CD8-positive, alpha-beta T cell (primary cell): ENCODE measurements at regions of chr17 and their contacts with region 1.

Region 1: DNA sequence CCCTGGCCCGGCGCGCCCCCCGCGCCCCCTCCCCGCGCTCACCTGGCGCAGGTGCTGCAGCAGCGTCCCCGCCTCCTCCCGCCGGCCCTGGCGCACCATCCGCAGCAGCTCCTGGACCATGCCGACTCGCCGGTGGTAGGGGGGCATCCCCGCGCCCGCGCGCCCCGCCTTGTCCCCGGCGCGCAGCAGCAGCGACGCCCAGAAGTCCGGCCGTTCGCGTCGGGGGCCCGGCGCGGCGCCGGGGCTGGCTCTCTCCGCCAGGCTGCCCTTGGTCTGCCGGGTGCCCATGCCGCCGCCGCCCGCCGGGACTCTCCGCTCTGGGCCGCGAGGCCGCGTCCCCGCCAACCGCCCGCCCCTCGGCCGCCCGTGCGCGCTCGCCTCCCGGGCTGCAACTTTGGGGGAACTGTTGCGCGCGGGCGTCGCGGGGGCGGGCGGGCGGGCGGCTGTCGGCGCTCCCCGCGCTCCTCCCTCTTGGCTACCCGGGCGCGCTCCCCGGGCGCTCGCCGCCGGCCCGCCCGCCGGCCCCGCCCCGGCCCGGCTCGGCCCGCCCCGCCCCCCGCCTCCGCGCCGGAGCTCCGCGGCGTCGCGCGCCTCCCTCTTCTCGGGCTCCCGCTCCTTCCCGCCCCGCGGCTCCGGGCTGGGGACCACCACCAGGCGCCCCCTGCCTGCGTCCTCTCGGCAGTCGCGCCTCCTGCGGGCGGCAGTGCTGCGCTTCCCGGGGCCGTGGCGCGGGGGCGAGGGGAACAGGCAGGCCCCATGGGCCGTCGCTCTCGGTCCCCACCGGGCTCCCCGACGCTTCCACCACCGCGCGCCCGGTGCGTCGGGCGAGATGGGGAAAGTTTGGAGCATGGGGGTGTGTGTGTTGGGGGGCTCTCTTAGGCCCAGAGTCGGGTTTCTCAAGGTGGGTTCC is at the start of gene LRRC75A:
- DNase-seq: peak; percentile 18 to 83 (median 50)
- ATAC-seq: peak; percentile 88
- H3K4me3 ChIP-seq: peak within 1 kb of the TSS; percentile 50 to 56
- H3K4me3 Mint-ChIP-seq: peak within 1 kb of the TSS; percentile 84
- H3K27ac ChIP-seq: no peak within 1 kb of the TSS
- H3K27ac Mint-ChIP-seq: peak within 1 kb of the TSS; percentile 55
- H3K4me1 ChIP-seq: peaks cover 19% of the 10 kb centered on the region
- H3K4me1 Mint-ChIP-seq: peaks cover 19% of the 10 kb centered on the region
- H3K27me3 ChIP-seq: no peaks in the 10 kb centered on the region
- H3K27me3 Mint-ChIP-seq: no peaks in the 10 kb centered on the region
- CTCF ChIP-seq: no peak
- total RNA-seq, gene LRRC75A: 1.7 TPM

Region 2: GRCh38 chr17:16453493-16453851 is 38.5 kb before region 1 on chr17:
- CTCF ChIA-PET with region 1: interaction called, 15 read pairs
- POLR2A ChIA-PET with region 1: no interaction called
- intact Hi-C with region 1: no loop called
- DNase-seq: no peak
- ATAC-seq: no peak
- H3K4me3 ChIP-seq: no peak overlapping the region
- H3K4me3 Mint-ChIP-seq: no peak overlapping the region
- H3K27ac ChIP-seq: no peak overlapping the region
- H3K27ac Mint-ChIP-seq: peak overlapping the region; percentile 55
- H3K4me1 ChIP-seq: no peaks in the 10 kb centered on the region
- H3K4me1 Mint-ChIP-seq: peaks cover 11% of the 10 kb centered on the region
- H3K27me3 ChIP-seq: no peaks in the 10 kb centered on the region
- H3K27me3 Mint-ChIP-seq: no peaks in the 10 kb centered on the region
- CTCF ChIP-seq: no peak

Region 3: GRCh38 chr17:16477255-16477654 is 14.7 kb before region 1 on chr17:
- CTCF ChIA-PET with region 1: no interaction called
- POLR2A ChIA-PET with region 1: no interaction called
- intact Hi-C with region 1: no loop called
- DNase-seq: no peak
- ATAC-seq: no peak
- H3K4me3 ChIP-seq: no peak overlapping the region
- H3K4me3 Mint-ChIP-seq: no peak overlapping the region
- H3K27ac ChIP-seq: no peak overlapping the region
- H3K27ac Mint-ChIP-seq: no peak overlapping the region
- H3K4me1 ChIP-seq: no peaks in the 10 kb centered on the region
- H3K4me1 Mint-ChIP-seq: no peaks in the 10 kb centered on the region
- H3K27me3 ChIP-seq: no peaks in the 10 kb centered on the region
- H3K27me3 Mint-ChIP-seq: no peaks in the 10 kb centered on the region
- CTCF ChIP-seq: no peak

Region 4: DNA sequence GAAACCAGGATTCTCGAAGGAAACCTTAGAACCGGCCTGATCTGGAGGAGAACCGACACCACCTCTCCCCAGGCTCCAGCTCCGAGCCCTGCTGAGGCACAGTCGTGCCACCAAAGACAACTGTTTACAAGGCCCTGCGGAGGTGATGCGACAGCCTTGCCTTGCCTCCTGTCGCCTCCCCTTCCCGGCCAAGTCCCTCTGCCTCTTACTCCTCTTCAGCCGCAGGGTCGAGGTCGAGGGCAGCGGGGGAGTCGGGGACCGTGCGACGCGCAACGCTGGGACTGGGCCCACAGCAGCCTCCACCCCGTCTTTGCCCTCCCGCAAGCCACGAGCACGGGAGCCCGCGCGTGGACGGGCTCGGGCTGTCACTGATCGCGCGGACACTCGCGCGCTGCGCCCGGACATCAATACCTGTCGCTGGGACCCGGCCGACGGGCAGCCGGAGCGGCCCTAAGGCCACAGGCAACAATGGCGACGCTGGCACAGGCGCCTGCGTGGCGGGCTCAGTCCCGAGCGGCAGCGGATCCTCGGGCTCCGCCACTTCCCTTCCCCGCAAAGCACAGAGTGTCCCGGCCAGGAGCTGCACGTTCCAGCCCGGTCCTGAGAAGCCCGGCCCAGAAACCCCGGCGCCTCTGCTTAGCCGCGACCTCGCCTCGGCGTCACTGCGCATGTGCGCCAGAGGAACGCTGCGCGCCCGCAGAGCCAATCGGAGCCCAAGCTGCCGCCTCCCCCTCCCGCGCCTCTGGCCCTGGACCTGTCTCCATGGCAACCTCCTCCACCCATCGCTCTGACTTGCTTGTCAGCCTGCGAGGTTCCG is 76.8 kb after region 1 on chr17 and contains the start of gene ZNF287:
- CTCF ChIA-PET with region 1: no interaction called
- POLR2A ChIA-PET with region 1: no interaction called
- intact Hi-C with region 1: loop called in 1 of 2 experiments (anchors 1 kb)
- DNase-seq: peak; percentile 84 to 97 (median 94)
- ATAC-seq: peak; percentile 96
- H3K4me3 ChIP-seq: peak within 1 kb of the TSS; percentile 63 to 68
- H3K4me3 Mint-ChIP-seq: peak within 1 kb of the TSS; percentile 83
- H3K27ac ChIP-seq: peak within 1 kb of the TSS; percentile 59 to 61
- H3K27ac Mint-ChIP-seq: peak within 1 kb of the TSS; percentile 89
- H3K4me1 ChIP-seq: peaks cover 9% of the 10 kb centered on the region
- H3K4me1 Mint-ChIP-seq: peaks cover 28% of the 10 kb centered on the region
- H3K27me3 ChIP-seq: no peaks in the 10 kb centered on the region
- H3K27me3 Mint-ChIP-seq: peaks cover 8% of the 10 kb centered on the region
- CTCF ChIP-seq: no peak
- total RNA-seq, gene ZNF287: 13.7 to 13.8 TPM

Region 5: DNA sequence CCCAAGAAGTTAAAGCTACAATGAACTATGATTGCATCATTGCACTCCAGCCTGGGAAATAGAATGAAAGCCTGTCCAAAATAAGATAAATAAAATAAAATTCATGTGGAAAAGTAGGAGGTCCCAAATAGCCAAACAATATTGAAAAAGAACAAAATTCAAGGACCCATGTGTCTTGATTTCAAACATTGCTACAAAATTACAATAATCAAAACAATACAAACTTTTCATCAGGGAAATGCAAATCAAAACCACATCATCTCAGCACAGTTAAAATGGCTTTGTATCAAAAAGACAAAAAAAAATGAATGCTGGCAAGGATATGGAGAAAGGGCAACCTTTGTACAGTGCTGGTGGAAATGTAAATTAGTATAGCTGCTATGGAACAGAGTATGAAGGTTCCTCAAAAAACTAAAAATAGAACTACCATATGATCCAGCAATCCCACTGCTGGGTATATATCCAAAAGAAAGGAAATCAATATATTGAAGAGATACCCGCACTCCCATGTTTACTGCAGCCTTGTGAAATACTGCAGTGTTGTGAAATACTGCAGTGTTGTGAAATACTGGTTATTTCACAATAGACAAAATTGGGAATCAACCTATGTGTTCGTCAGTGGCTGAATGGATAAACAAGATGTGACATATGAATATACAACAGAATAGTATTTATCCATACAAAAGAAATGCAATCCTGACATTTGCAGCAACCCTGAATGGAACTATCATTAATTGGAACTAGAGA is 101.6 kb after region 1 on chr17:
- CTCF ChIA-PET with region 1: no interaction called
- POLR2A ChIA-PET with region 1: no interaction called
- intact Hi-C with region 1: no loop called
- DNase-seq: no peak
- ATAC-seq: no peak
- H3K4me3 ChIP-seq: no peak overlapping the region
- H3K4me3 Mint-ChIP-seq: no peak overlapping the region
- H3K27ac ChIP-seq: no peak overlapping the region
- H3K27ac Mint-ChIP-seq: no peak overlapping the region
- H3K4me1 ChIP-seq: peaks cover 8% of the 10 kb centered on the region
- H3K4me1 Mint-ChIP-seq: peaks cover 8% of the 10 kb centered on the region
- H3K27me3 ChIP-seq: no peaks in the 10 kb centered on the region
- H3K27me3 Mint-ChIP-seq: peaks cover 25% of the 10 kb centered on the region
- CTCF ChIP-seq: no peak